ENCODE measurements at regions of chr1 and their contacts with region 1.

Region 1: DNA sequence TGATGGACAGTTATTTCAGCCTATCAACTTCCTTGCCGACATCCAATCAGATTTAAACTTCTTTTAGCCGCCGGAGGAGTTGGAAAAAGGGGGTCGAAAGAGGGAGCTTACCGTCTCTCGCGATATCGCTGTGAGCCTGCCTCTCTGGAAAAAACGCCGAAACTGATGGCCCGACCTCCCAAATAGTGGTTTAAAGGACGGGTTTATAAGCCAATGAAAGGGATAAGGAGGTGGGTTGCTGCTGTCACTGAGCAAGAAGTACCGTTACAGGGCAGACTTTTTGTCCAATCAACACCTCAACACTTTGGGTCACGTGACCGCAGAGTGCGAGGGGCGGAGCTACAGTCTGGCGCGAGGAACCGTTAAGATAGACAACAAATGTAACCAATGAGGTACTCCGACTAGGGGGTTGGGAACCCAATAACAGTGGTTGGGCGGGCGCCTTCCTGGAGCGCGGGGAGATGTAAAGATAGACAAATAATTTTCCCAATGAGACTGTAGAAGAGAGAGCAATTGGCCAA is at the start of gene RBM15:
- DNase-seq: peak; percentile 77 to 100 (median 99)
- ATAC-seq: peak; percentile 84
- H3K4me3 ChIP-seq: peak within 1 kb of the TSS; percentile 94
- H3K4me3 Mint-ChIP-seq: no peak within 1 kb of the TSS
- H3K27ac ChIP-seq: peak within 1 kb of the TSS; percentile 96
- H3K27ac Mint-ChIP-seq: peak within 1 kb of the TSS in 1 of 9 donors; percentile 97
- H3K4me1 ChIP-seq: peaks cover 40 to 41% of the 10 kb centered on the region in 2 donors
- H3K4me1 Mint-ChIP-seq: peaks cover 37 to 64% (median 61%) of the 10 kb centered on the region in 7 donors
- H3K27me3 ChIP-seq: no peaks in the 10 kb centered on the region
- H3K27me3 Mint-ChIP-seq: peaks cover 0 to 2% (median 0%) of the 10 kb centered on the region in 5 donors
- total RNA-seq, gene RBM15: 36.4 to 58.6 (median 46.3) TPM

Region 2: GRCh38 chr1:108963052-108963686 is 1375.8 kb before region 1 on chr1 and contains the start of gene CLCC1:
- CTCF ChIA-PET with region 1: no interaction called
- POLR2A ChIA-PET with region 1: no interaction called
- intact Hi-C with region 1: loop called in 1 of 2 experiments (anchors 2 kb)
- DNase-seq: peak; percentile 78 to 92 (median 89)
- ATAC-seq: peak; percentile 97
- H3K4me3 ChIP-seq: peak within 1 kb of the TSS; percentile 76
- H3K4me3 Mint-ChIP-seq: peak within 1 kb of the TSS; percentile 87 to 94 (median 90)
- H3K27ac ChIP-seq: peak within 1 kb of the TSS; percentile 85
- H3K27ac Mint-ChIP-seq: peak within 1 kb of the TSS; percentile 78 to 97 (median 92)
- H3K4me1 ChIP-seq: peaks cover 11 to 16% of the 10 kb centered on the region in 2 donors
- H3K4me1 Mint-ChIP-seq: peaks cover 21 to 48% (median 37%) of the 10 kb centered on the region in 7 donors
- H3K27me3 ChIP-seq: no peaks in the 10 kb centered on the region
- H3K27me3 Mint-ChIP-seq: peaks cover 0 to 15% (median 0%) of the 10 kb centered on the region in 5 donors
- total RNA-seq, gene CLCC1: 15.4 to 34.6 (median 25.2) TPM

Region 3: DNA sequence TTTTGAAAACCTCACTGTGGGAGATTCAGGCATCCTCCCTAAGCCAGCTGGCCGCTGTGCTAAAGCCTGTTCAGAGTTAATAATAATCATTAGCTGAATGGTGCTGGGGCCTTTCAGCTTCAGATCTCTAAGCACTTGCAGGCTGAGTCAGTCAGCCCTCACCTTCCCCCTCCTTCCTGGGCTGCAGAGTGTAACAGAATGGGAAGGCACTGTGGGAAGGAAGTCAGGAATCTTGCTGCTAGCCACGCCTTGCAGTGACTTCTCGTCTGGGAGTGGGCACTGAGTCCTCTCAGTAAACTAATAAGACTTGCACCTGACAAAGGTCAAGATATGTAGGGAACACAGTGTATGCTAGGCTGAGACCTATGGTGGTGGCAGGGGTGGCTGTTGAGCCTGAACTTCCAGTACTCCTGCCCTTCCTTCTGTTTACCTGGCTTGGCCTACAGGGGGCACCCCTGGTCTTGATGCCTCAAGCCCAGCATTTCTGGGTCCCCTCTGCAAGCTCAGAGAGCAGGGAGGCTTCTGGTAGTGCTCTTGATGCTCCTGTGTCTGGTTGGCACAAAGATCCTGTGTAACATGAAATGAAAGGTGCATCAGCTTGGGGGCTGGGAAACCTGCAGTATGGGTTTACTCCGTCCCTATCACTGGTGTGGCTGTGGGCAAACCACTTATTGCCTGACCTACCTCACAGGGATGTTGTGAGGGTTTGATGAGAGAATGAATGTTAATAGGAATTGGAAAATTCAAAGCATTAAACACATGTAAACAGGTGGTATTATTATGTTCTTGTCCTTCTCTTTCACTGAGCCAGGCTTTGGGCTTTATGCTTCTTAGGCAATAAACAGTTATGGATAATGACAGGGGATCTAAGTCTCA is 839.0 kb before region 1 on chr1:
- CTCF ChIA-PET with region 1: no interaction called
- POLR2A ChIA-PET with region 1: no interaction called
- intact Hi-C with region 1: loop called in 1 of 2 experiments (anchors 5 kb)
- DNase-seq: peak in 8 of 9 donors; percentile 50 to 69 (median 62)
- ATAC-seq: peak; percentile 28
- H3K4me3 ChIP-seq: peak overlapping the region; percentile 9
- H3K4me3 Mint-ChIP-seq: peak overlapping the region; percentile 28 to 98 (median 89)
- H3K27ac ChIP-seq: peak overlapping the region; percentile 95
- H3K27ac Mint-ChIP-seq: peak overlapping the region; percentile 87 to 99 (median 98)
- H3K4me1 ChIP-seq: peaks cover 72 to 84% of the 10 kb centered on the region in 2 donors
- H3K4me1 Mint-ChIP-seq: peaks cover 68 to 99% (median 93%) of the 10 kb centered on the region in 7 donors
- H3K27me3 ChIP-seq: no peaks in the 10 kb centered on the region
- H3K27me3 Mint-ChIP-seq: no peaks in the 10 kb centered on the region

Region 4: GRCh38 chr1:110203021-110203661 is 135.8 kb before region 1 on chr1:
- CTCF ChIA-PET with region 1: interaction called, 36 read pairs
- POLR2A ChIA-PET with region 1: interaction called, 118 read pairs
- intact Hi-C with region 1: no loop called
- DNase-seq: peak; percentile 31 to 83 (median 74)
- ATAC-seq: peak; percentile 71
- H3K4me3 ChIP-seq: no peak overlapping the region
- H3K4me3 Mint-ChIP-seq: peak overlapping the region in 5 of 10 donors; percentile 1 to 26 (median 18)
- H3K27ac ChIP-seq: no peak overlapping the region
- H3K27ac Mint-ChIP-seq: peak overlapping the region; percentile 53 to 92 (median 87)
- H3K4me1 ChIP-seq: peaks cover 8 to 20% of the 10 kb centered on the region in 2 donors
- H3K4me1 Mint-ChIP-seq: peaks cover 13 to 32% (median 23%) of the 10 kb centered on the region in 7 donors
- H3K27me3 ChIP-seq: no peaks in the 10 kb centered on the region
- H3K27me3 Mint-ChIP-seq: no peaks in the 10 kb centered on the region

Region 5: GRCh38 chr1:110460253-110461220 is 121.6 kb after region 1 on chr1:
- CTCF ChIA-PET with region 1: interaction called, 5 read pairs
- POLR2A ChIA-PET with region 1: interaction called, 4 read pairs
- intact Hi-C with region 1: loop called in 1 of 2 experiments (anchors 2 kb)
- DNase-seq: peak; percentile 66 to 91 (median 83)
- ATAC-seq: peak; percentile 96
- H3K4me3 ChIP-seq: no peak overlapping the region
- H3K4me3 Mint-ChIP-seq: no peak overlapping the region
- H3K27ac ChIP-seq: no peak overlapping the region
- H3K27ac Mint-ChIP-seq: no peak overlapping the region
- H3K4me1 ChIP-seq: no peaks in the 10 kb centered on the region
- H3K4me1 Mint-ChIP-seq: no peaks in the 10 kb centered on the region
- H3K27me3 ChIP-seq: no peaks in the 10 kb centered on the region
- H3K27me3 Mint-ChIP-seq: no peaks in the 10 kb centered on the region

Region 6: DNA sequence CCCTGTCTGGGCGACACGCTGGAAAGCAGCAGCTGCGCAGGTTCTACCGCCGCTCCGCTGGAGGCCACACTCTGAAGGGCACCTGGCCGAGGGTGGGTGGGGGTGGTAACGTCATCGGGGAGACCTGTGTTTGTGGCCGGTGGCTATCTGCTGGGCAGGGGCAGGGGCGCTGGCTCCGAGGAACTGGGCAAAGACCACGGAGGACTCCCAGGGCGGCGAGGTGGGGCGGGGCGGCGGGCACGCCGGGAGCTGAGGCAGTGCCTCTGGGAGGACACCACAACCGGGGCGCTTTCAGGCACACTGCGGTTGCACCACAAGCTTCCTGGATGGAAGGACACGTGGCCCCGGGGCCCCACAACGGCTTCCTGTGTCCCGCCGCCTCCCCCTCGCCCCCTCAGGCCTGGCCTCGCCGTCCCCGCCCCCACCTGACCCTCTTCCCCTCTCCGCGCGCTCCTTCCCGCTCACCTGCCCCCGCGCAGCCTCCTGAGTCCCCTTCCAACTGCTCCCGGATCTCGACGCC is 864.8 kb after region 1 on chr1:
- CTCF ChIA-PET with region 1: no interaction called
- POLR2A ChIA-PET with region 1: no interaction called
- intact Hi-C with region 1: loop called in 1 of 2 experiments (anchors 5 kb)
- DNase-seq: peak; percentile 51 to 86 (median 82)
- ATAC-seq: peak; percentile 71
- H3K4me3 ChIP-seq: peak overlapping the region; percentile 84
- H3K4me3 Mint-ChIP-seq: peak overlapping the region; percentile 90 to 100 (median 99)
- H3K27ac ChIP-seq: peak overlapping the region; percentile 90
- H3K27ac Mint-ChIP-seq: peak overlapping the region; percentile 80 to 99 (median 96)
- H3K4me1 ChIP-seq: peaks cover 30 to 32% of the 10 kb centered on the region in 2 donors
- H3K4me1 Mint-ChIP-seq: peaks cover 32 to 76% (median 61%) of the 10 kb centered on the region in 7 donors
- H3K27me3 ChIP-seq: no peaks in the 10 kb centered on the region
- H3K27me3 Mint-ChIP-seq: no peaks in the 10 kb centered on the region